ENCODE measurements at regions of chr19 and their contacts with region 1.

Region 1: GRCh38 chr19:54448774-54449700 is at the start of gene LENG8:
- DNase-seq: peak; percentile 98
- ATAC-seq: peak; percentile 90
- H3K4me3 Mint-ChIP-seq: peak within 1 kb of the TSS; percentile 100
- H3K27ac Mint-ChIP-seq: peak within 1 kb of the TSS; percentile 98
- H3K4me1 Mint-ChIP-seq: peaks cover 21% of the 10 kb centered on the region
- H3K27me3 Mint-ChIP-seq: no peaks in the 10 kb centered on the region
- total RNA-seq, gene LENG8: 338 to 359 TPM

Region 2: DNA sequence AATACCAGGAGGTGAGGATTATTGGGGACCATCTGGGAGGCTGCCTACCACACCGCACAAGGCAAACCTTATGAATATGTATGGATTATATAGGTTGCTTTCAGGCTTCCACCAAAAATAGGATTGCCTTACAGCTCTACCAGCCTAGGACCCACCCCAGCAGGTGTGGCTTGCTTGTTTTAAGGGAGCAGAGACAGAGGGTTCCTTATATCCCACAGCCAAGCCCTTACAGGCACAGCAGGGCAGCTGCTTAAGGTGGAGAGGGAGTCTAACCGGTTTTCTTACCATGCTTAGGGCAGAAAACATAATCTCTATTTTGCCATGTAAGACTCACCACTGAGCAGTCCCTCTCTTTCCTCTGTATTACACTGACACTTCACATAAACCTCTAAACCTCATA is 49.8 kb before region 1 on chr19:
- POLR2A ChIA-PET with region 1: no interaction called
- DNase-seq: no peak
- ATAC-seq: no peak
- H3K4me3 Mint-ChIP-seq: no peak overlapping the region
- H3K27ac Mint-ChIP-seq: no peak overlapping the region
- H3K4me1 Mint-ChIP-seq: no peaks in the 10 kb centered on the region
- H3K27me3 Mint-ChIP-seq: peaks cover 10% of the 10 kb centered on the region

Region 3: GRCh38 chr19:54463531-54464043 is 14.6 kb after region 1 on chr19 and contains the start of gene LENG9:
- POLR2A ChIA-PET with region 1: interaction called, 16 read pairs
- DNase-seq: peak; percentile 93
- ATAC-seq: peak; percentile 69
- H3K4me3 Mint-ChIP-seq: peak within 1 kb of the TSS; percentile 93
- H3K27ac Mint-ChIP-seq: peak within 1 kb of the TSS; percentile 89
- H3K4me1 Mint-ChIP-seq: peaks cover 14% of the 10 kb centered on the region
- H3K27me3 Mint-ChIP-seq: peaks cover 17% of the 10 kb centered on the region
- total RNA-seq, gene LENG9: 6.2 to 7.0 TPM

Region 4: GRCh38 chr19:54485851-54486250 is 36.8 kb after region 1 on chr19:
- POLR2A ChIA-PET with region 1: no interaction called
- DNase-seq: no peak
- ATAC-seq: no peak
- H3K4me3 Mint-ChIP-seq: no peak overlapping the region
- H3K27ac Mint-ChIP-seq: no peak overlapping the region
- H3K4me1 Mint-ChIP-seq: peaks cover 12% of the 10 kb centered on the region
- H3K27me3 Mint-ChIP-seq: peaks cover 38% of the 10 kb centered on the region

Measured in activated naive CD8-positive, alpha-beta T cell treated with anti-CD3 and anti-CD28 coated beads, Interleukin-2, amount 10 ng/mL, durations not matched to agents 7 days and 5 days (primary cell).